ENCODE measurements at regions of chr14 and their contacts with region 1.

Region 1: GRCh38 chr14:53192052-53192760 is 39.1 kb upstream of the DDHD1 start:
- DNase-seq: no peak
- H3K4me3 ChIP-seq: no peak overlapping the region
- H3K4me3 Mint-ChIP-seq: no peak overlapping the region
- H3K27ac Mint-ChIP-seq: no peak overlapping the region
- H3K4me1 ChIP-seq: no peaks in the 10 kb centered on the region
- H3K4me1 Mint-ChIP-seq: no peaks in the 10 kb centered on the region
- H3K27me3 ChIP-seq: no peaks in the 10 kb centered on the region
- H3K27me3 Mint-ChIP-seq: no peaks in the 10 kb centered on the region
- CTCF ChIP-seq: no peak

Region 2: DNA sequence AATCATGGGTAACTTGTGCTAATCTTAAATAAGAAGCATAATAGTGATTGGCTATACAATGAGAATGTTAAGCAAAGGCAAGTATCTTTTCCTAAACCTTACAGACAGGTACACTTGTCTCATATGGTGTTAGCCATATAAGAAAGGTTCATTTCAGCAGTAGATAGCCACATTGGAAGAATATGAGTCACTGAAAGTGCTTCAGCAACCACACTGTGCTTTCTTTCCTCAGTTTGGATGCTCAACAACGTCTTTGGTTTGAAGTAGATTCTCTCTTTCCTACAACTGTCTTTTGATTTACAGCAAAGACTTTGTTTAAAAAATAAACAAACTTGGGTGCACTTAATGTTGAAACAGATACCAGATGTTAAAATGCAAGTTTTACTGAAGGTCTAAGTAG is 48.0 kb before region 1 on chr14:
- CTCF ChIA-PET with region 1: no interaction called
- POLR2A ChIA-PET with region 1: no interaction called
- intact Hi-C with region 1: no loop called
- DNase-seq: no peak
- H3K4me3 ChIP-seq: no peak overlapping the region
- H3K4me3 Mint-ChIP-seq: no peak overlapping the region
- H3K27ac Mint-ChIP-seq: no peak overlapping the region
- H3K4me1 ChIP-seq: no peaks in the 10 kb centered on the region
- H3K4me1 Mint-ChIP-seq: no peaks in the 10 kb centered on the region
- H3K27me3 ChIP-seq: no peaks in the 10 kb centered on the region
- H3K27me3 Mint-ChIP-seq: no peaks in the 10 kb centered on the region
- CTCF ChIP-seq: no peak

Region 3: GRCh38 chr14:53180268-53181221 is 11.7 kb before region 1 on chr14:
- CTCF ChIA-PET with region 1: no interaction called
- POLR2A ChIA-PET with region 1: no interaction called
- intact Hi-C with region 1: loop called (anchors 1 kb)
- DNase-seq: peak; percentile 39
- H3K4me3 ChIP-seq: no peak overlapping the region
- H3K4me3 Mint-ChIP-seq: no peak overlapping the region
- H3K27ac Mint-ChIP-seq: no peak overlapping the region
- H3K4me1 ChIP-seq: no peaks in the 10 kb centered on the region
- H3K4me1 Mint-ChIP-seq: no peaks in the 10 kb centered on the region
- H3K27me3 ChIP-seq: no peaks in the 10 kb centered on the region; the same call in 1 of the 2 replicates
- H3K27me3 Mint-ChIP-seq: peaks cover 16% of the 10 kb centered on the region
- CTCF ChIP-seq: peak; percentile 23 to 31

Measured in Caco-2 (cell line).